Heart left ventricle (tissue), 16 donors: ENCODE measurements at regions of chr3 and their contacts with region 1.

Region 1: DNA sequence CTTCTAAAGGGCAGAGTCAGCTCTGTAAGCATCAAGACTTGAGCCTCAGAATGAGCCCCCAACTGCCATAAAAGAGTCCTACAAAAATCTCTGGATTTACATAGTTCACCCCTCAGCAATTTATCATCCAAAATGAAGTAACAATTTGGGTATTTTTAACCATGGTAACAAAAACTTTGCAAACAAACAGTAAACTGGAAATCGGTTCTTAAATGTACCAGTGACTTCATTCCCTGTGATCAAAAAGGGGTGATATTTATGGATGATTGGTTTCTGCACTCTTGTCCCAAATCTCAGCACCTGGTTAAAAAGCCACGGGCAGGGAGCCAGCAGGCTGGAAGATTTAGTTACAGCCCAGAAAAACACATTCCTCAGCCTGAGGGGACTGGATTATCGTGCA is 73.6 kb downstream of the TFG start:
- DNase-seq: peak in 1 of 5 donors; percentile 26
- ATAC-seq: no peak
- H3K4me3 ChIP-seq: no peak overlapping the region
- H3K27ac ChIP-seq: peak overlapping the region in 2 of 12 donors; percentile 12 to 20
- H3K4me1 ChIP-seq: peaks cover 0 to 9% (median 0%) of the 10 kb centered on the region in 12 donors
- H3K27me3 ChIP-seq: no peaks in the 10 kb centered on the region
- CTCF ChIP-seq: no peak
- POLR2A ChIP-seq: no peak

Region 2: DNA sequence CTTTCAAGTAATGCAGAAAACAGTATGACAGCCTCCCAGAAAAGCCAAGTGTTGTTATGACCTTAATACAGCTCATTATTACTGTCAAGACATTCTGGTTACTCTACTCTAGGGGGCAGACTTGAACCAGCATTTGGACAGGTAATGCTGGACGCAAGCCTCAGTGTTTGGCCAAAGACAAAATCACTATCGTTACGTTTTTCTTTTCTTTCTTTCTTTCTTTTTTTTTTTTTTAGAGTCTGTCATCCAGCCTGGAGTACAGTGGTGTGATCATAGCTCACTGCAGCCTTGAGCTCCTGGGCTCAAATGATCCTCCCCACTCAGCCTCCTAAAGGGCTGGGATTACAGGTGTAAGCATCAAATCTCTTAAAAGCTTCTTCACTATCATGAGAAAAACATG is 319.9 kb before region 1 on chr3:
- intact Hi-C with region 1: loop called in 1 of 10 experiments (anchors 10 kb)
- DNase-seq: peak in 1 of 5 donors; percentile 10
- ATAC-seq: peak in 3 of 4 donors; percentile 77 to 89 (median 85)
- H3K4me3 ChIP-seq: no peak overlapping the region
- H3K27ac ChIP-seq: no peak overlapping the region
- H3K4me1 ChIP-seq: peaks cover 0 to 9% (median 0%) of the 10 kb centered on the region in 12 donors
- H3K27me3 ChIP-seq: no peaks in the 10 kb centered on the region
- CTCF ChIP-seq: peak; percentile 47 to 79 (median 62)
- POLR2A ChIP-seq: no peak

Region 3: GRCh38 chr3:100737334-100737733 is 45.6 kb before region 1 on chr3:
- intact Hi-C with region 1: no loop called
- DNase-seq: no peak
- ATAC-seq: no peak
- H3K4me3 ChIP-seq: no peak overlapping the region
- H3K27ac ChIP-seq: no peak overlapping the region
- H3K4me1 ChIP-seq: peaks cover 0 to 32% (median 5%) of the 10 kb centered on the region in 12 donors
- H3K27me3 ChIP-seq: no peaks in the 10 kb centered on the region
- CTCF ChIP-seq: peak in 10 of 12 donors; percentile 9 to 50 (median 34)
- POLR2A ChIP-seq: no peak